ENCODE measurements at regions of chr9 and their contacts with region 1.

Region 1: DNA sequence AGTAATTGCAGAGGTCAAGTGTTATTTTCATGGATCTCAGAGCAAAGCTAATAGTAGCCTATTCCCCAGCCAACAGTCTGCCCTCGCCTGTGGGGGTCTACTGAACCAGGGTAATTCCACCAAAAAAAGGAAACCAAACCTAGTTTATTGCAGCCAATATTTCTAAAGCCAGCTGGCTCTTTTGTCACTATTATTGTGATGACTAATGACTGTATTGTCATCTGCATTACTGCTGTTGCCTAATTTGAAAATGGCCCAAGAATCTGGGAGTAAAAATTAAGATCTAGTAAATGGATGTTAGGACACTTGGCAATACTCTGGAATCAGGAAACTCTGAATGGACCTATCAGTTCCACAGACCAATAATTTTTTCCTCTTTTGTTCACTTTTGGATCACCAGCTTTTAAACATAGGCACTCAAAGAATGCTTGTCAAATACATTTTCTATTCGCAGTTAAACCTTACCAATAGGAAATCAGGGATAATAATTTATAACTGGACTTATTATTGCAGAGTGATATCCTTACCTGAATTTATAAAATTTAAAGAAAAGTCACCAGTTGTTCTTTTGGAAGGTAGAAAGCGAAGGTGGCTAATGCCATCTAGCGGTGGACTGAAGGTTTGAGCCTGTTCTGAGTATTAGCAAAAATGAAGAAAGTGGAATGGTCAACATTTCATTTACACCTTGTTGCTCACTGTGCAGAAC is 69.2 kb downstream of the SYK start:
- DNase-seq: no peak
- ATAC-seq: peak; percentile 54

Region 2: DNA sequence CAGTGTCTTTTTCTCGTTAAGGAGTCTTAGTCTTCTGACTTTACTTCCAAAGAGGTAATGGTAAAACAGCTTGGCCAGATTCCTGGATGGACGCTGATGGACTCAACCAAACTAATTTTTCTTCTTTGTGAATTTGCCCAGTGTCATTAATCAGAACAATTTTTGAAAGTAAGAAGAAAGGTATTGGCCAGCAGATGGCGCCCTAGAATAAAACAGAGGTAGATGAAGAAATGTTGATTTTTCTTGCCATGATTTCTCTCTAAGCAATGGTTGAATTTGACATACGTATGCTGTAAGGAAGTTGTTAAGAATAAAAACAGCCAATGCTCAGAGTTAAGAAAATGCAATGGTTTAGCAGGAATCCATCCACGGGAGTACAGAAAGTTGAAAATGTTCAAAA is 728.2 kb before region 1 on chr9:
- intact Hi-C with region 1: loop called (anchors 5 kb)
- DNase-seq: no peak
- ATAC-seq: no peak

Region 3: GRCh38 chr9:90219548-90220118 is 651.1 kb before region 1 on chr9:
- intact Hi-C with region 1: loop called (anchors 10 kb)
- DNase-seq: peak; percentile 47
- ATAC-seq: no peak

Region 4: GRCh38 chr9:90972057-90972456 is 101.3 kb after region 1 on chr9:
- intact Hi-C with region 1: no loop called
- DNase-seq: no peak
- ATAC-seq: no peak

Region 5: DNA sequence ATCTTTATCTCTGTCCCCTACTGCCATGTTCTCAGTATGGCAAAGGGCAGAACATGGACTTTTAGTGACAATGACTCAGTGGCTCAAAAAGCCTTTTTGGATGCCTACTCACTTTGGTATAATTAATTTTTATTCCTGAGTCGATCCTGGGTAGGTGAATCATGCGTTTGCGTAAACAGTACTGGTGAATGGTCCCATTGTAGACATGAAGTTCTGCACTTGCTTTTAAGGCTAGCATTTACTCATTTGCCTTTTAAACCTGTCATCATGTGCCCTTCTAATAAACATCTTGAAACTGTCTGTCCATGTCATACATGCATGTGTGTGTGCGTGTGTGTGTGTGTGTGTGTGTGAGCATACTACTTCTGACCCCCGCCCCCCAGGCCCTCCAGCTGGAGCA is 268.0 kb after region 1 on chr9:
- intact Hi-C with region 1: no loop called
- DNase-seq: no peak
- ATAC-seq: no peak